PC-3 (cell line): ENCODE measurements at regions of chr5 and their contacts with region 1.

Region 1: DNA sequence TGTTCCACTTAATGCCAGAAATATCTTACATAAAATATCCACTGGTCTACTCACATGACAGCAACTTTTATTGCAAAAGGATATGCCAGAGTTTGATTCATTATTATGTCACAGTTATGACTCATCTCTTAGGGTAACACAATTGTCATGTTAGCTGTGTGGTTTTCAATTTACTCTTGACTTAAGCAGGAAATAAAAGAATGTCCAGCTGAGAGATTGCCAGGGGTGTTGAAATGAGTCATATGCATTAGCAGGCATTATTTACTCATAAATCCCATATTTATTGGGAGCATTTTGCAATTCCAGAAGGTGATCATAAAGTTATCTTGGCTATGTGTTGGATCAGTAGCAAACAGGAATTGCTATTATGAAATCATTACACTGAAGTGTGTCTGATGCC is 1164.6 kb upstream of the CDH18 start:
- DNase-seq: peak; percentile 100
- ATAC-seq: peak; percentile 72
- H3K4me3 ChIP-seq: no peak overlapping the region
- H3K27ac ChIP-seq: peak overlapping the region; percentile 57
- H3K4me1 ChIP-seq: peaks cover 35% of the 10 kb centered on the region
- H3K27me3 ChIP-seq: no peaks in the 10 kb centered on the region
- CTCF ChIP-seq: no peak

Region 2: DNA sequence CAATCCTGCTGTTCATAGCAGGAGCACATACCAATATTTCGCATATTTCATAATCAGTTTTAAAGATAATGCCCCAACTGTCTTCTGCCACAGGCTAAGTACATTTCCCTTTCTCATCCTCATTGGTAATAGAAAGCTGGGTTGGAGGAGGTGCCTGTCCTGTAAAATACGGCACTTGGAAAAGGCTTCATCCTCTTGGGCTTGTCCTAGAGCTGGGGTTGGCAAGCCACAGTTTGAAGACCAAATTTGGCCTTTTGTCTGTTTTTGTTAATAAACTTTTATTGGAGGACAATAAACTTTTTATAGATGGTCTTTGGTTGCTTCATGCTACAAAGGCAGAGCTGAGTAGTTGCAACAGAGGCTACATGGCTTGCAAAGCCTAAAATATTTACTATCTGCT is 166.9 kb before region 1 on chr5:
- CTCF ChIA-PET with region 1: no interaction called
- POLR2A ChIA-PET with region 1: no interaction called
- intact Hi-C with region 1: loop called (anchors 5 kb)
- DNase-seq: peak; percentile 29
- ATAC-seq: peak; percentile 94
- H3K4me3 ChIP-seq: no peak overlapping the region
- H3K27ac ChIP-seq: no peak overlapping the region
- H3K4me1 ChIP-seq: no peaks in the 10 kb centered on the region
- H3K27me3 ChIP-seq: no peaks in the 10 kb centered on the region
- CTCF ChIP-seq: no peak

Region 3: DNA sequence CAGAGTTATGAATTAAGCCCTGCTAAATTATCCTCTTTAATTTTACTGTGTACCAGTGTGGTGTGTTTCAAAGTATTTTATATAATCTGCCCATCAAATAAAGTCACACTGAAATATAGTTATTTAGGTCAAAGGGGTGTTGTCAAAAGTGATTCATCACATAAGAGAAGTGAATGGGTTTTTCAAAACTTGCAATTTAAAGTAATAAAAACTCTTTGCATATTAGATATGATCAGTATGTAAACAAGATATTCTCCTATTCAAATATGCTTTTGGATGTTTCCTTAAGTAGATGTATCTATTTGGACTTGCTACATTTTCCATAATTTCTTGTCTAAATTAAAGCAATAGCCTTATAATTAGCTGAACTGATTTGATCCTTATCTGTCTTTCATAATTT is 18.5 kb after region 1 on chr5:
- CTCF ChIA-PET with region 1: no interaction called
- POLR2A ChIA-PET with region 1: no interaction called
- intact Hi-C with region 1: loop called (anchors 1 kb)
- DNase-seq: peak; percentile 70
- ATAC-seq: peak; percentile 77
- H3K4me3 ChIP-seq: no peak overlapping the region
- H3K27ac ChIP-seq: peak overlapping the region; percentile 30
- H3K4me1 ChIP-seq: peaks cover 28% of the 10 kb centered on the region
- H3K27me3 ChIP-seq: no peaks in the 10 kb centered on the region
- CTCF ChIP-seq: no peak

Region 4: DNA sequence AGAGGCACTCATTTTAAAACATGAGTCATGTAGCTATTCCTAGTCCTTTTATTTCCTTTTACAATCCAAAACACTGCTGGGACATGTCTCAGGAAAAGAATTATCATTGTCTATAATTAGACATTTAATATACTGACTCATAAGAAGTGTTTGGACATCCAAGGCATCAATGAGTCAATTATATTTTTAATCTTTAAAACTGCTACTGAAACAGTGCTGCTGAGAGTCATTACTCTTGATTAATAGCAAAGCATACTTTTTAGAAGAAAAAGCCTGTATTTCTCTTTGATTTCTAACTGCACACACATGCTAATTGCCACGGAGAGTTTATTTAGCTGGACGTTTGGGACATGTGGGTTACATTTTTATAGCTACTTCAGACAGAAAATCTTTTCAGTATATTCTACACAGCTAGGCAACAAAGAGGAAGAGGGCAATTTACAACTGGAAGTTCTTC is 84.4 kb after region 1 on chr5:
- CTCF ChIA-PET with region 1: no interaction called
- POLR2A ChIA-PET with region 1: no interaction called
- intact Hi-C with region 1: loop called (anchors 1 kb)
- DNase-seq: peak; percentile 49
- ATAC-seq: peak; percentile 81
- H3K4me3 ChIP-seq: no peak overlapping the region
- H3K27ac ChIP-seq: peak overlapping the region; percentile 34
- H3K4me1 ChIP-seq: peaks cover 25% of the 10 kb centered on the region
- H3K27me3 ChIP-seq: no peaks in the 10 kb centered on the region
- CTCF ChIP-seq: no peak

Region 5: GRCh38 chr5:21254161-21254560 is 101.6 kb after region 1 on chr5:
- CTCF ChIA-PET with region 1: no interaction called
- POLR2A ChIA-PET with region 1: no interaction called
- intact Hi-C with region 1: no loop called
- DNase-seq: no peak
- ATAC-seq: no peak
- H3K4me3 ChIP-seq: no peak overlapping the region
- H3K27ac ChIP-seq: no peak overlapping the region
- H3K4me1 ChIP-seq: no peaks in the 10 kb centered on the region
- H3K27me3 ChIP-seq: no peaks in the 10 kb centered on the region
- CTCF ChIP-seq: no peak

Region 6: DNA sequence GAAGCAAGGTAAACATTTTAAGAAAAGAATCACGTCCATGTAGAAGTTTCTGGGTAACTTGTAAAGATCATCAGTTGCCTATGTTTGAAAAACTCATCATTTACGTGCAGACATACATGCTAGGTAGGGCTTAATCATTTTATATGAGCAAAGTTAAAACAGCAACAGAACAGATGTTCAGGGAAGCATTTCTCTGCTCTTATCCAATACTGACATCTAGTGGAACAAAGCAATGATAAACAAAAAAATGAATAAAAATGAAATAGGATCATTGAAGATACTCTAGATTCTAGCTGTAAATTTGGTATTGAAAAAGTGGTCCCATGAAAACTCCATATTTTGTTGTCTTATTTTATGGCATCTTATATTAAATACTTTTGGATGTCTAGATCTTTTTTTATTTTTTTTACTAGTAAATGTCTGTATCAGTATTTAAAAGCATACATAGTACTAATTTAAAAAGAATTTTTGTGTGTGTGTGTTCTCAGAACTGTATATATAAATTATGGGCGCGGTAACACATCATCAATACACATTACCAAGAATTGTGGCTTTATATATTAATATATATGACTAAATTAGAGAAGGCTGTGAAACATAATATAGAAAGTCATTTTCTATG is 650.4 kb after region 1 on chr5:
- CTCF ChIA-PET with region 1: no interaction called
- POLR2A ChIA-PET with region 1: no interaction called
- intact Hi-C with region 1: loop called (anchors 10 kb)
- DNase-seq: peak; percentile 79
- ATAC-seq: peak; percentile 57
- H3K4me3 ChIP-seq: no peak overlapping the region
- H3K27ac ChIP-seq: no peak overlapping the region
- H3K4me1 ChIP-seq: peaks cover 22% of the 10 kb centered on the region
- H3K27me3 ChIP-seq: no peaks in the 10 kb centered on the region
- CTCF ChIP-seq: peak; percentile 95